Mucosa of descending colon (tissue), 3 donors: ENCODE measurements at regions of chr5 and their contacts with region 1.

Region 1: DNA sequence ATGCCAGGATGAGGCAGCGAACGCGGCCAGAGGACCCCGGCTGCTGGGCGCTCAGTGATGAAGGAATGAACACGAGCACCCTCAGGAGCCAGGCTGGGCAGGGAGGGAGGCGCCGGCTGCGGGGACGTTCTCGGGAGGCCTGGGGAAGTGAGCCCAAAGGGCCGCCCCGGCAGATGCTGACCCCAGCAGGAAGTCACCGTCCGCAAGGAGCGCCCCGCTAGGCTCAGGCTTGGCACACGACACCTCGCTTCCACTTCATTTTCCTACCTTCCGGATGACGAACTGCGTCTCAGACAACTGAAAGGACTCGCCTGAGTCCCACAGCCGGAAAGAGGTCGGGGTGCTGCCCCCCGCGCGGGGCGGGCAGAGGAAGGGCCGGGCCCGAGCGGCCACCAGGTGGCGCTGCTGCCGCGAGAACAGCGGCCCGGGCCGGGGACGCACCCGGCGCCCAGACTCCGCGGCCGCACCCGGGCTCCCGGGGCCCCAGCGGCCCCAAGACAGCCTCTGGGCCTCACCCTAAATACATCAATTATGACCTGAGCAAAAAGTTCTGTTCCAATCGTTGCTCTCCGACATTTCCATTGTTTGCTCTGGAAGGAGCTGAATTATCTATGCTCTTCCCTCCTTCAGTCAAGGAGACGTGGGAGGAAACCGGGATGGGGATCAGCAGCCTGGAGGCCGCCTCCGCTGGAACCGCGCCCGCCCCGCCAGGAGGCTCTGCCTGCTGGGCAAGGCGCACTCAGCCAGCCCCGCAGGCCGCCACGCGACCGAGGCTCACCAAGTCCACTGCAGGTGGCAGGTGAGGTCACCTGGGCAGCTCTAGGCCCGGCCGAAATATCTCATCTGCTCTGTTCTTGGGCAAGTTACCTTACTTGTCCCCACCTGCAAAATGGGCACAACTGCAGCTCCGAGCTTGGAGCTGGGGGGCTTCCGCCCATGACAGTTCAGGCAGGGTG is 107.0 kb downstream of the ZNF354C start:
- DNase-seq: peak in 2 of 3 donors; percentile 51 to 58
- ATAC-seq: peak; percentile 75
- H3K4me3 ChIP-seq: no peak overlapping the region
- H3K4me1 ChIP-seq: peaks cover 4% of the 10 kb centered on the region
- CTCF ChIP-seq: peak; percentile 83

Region 2: GRCh38 chr5:179033004-179033580 is 134.1 kb before region 1 on chr5:
- intact Hi-C with region 1: no loop called
- DNase-seq: no peak
- ATAC-seq: no peak
- H3K4me3 ChIP-seq: no peak overlapping the region
- H3K4me1 ChIP-seq: no peaks in the 10 kb centered on the region
- CTCF ChIP-seq: no peak

Region 3: DNA sequence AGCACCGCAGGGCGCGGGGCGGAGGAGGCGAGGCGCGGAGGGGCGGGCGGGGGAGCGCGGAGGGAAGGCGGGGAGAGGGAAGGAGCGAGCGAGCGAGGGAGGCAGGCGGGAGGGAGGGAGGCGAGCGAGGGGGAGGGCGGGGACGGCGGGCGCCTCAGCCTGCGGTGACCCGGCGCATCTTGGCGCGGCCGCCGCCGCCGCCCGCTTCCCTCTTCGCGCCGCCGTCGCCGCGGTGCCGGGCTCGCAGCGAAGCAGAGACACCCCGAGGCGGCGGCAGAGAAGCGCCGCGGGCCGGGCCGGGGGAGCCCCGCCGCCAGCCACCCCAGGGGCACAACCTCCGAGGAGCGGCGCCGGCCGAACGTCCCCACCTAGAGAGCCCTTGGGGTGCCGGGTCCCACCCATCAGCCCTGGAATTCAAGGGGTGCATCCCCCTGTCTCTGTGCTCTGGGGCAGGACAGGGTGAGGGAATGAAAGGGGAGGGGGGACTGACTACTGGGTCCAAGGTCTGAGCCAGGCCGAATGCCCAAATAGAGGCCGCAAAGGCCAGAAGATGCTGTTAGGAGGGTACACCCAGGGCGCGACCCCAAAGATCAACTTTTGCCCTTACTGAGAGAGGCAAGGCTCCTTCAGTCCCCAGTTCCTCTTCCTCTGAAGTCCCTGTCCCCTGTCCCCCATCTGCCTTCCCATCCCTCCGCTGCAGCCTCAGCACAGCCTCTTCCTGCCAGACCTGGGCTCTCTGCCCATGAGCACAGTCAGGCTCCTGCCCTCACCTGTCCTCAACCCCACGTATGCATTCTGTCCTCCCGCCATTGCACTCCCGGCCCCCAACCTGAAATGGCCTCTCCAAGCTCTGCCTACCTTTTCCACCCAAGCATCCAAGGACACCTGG is 178.5 kb after region 1 on chr5 and contains the start of gene ADAMTS2:
- intact Hi-C with region 1: loop called in 1 of 2 experiments (anchors 10 kb)
- DNase-seq: peak; percentile 27 to 49 (median 34)
- ATAC-seq: peak; percentile 45
- H3K4me3 ChIP-seq: peak within 1 kb of the TSS; percentile 17
- H3K4me1 ChIP-seq: peaks cover 2% of the 10 kb centered on the region
- CTCF ChIP-seq: no peak
- total RNA-seq, gene ADAMTS2: 1.3 to 9.2 (median 7.3) TPM

Region 4: DNA sequence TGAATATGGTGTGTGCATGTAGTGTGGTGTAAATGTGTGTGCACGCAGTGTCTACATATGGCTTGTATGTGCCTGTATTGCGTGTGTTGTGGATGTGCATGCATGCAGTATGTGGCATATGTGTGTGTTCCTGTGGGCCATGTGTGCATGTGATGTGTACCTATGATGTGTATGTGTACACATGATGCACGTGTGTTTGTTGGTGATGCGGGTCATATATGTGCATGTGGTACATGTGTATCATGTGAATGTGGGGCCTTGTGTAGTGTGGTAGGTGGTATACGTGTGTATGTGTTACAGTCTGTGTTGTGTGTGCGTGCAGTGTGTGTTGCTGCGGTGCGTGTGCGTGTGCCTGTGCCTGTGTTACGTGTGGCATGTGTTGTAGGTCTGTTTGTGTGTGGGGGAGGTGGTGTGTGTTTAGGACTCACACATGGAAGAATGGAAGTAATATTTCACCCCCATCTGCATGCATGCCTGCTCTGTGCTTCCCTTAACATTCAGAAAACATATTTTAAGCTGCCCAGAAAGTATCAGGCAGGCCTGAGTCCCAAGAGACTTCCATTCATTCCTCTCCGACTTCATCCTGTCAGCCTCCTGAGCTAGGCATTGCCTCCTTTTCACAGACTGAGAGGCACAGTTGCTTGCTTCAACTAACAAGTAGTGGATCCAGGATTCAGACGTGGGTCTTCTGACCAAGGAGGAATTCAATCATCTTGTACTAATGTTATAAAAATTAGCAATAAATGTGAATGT is 327.8 kb after region 1 on chr5:
- intact Hi-C with region 1: loop called (anchors 5 kb)
- DNase-seq: no peak
- ATAC-seq: peak; percentile 11
- H3K4me3 ChIP-seq: no peak overlapping the region
- H3K4me1 ChIP-seq: no peaks in the 10 kb centered on the region
- CTCF ChIP-seq: no peak